Panc1 (cell line): ENCODE measurements at regions of chr15 and their contacts with region 1.

Region 1: GRCh38 chr15:99692825-99693224 is 40.4 kb downstream of the LYSMD4 start:
- DNase-seq: no peak
- ATAC-seq: no peak
- H3K4me3 ChIP-seq: no peak overlapping the region
- H3K27ac ChIP-seq: no peak overlapping the region
- H3K4me1 ChIP-seq: no peaks in the 10 kb centered on the region
- H3K27me3 ChIP-seq: no peaks in the 10 kb centered on the region
- CTCF ChIP-seq: no peak

Region 2: GRCh38 chr15:99250494-99251435 is 442.1 kb before region 1 on chr15:
- CTCF ChIA-PET with region 1: no interaction called
- POLR2A ChIA-PET with region 1: interaction called, 13 read pairs
- in situ Hi-C with region 1: no loop called
- intact Hi-C with region 1: no loop called
- DNase-seq: peak; percentile 99
- ATAC-seq: peak; percentile 97
- H3K4me3 ChIP-seq: peak overlapping the region; percentile 87 to 96
- H3K27ac ChIP-seq: peak overlapping the region; percentile 100
- H3K4me1 ChIP-seq: peaks cover 40% of the 10 kb centered on the region
- H3K27me3 ChIP-seq: no peaks in the 10 kb centered on the region
- CTCF ChIP-seq: no peak